Panc1 (cell line): ENCODE measurements at regions of chr2 and their contacts with region 1.

Region 1: GRCh38 chr2:96747136-96747535 is 7.3 kb upstream of the LMAN2L start:
- DNase-seq: no peak
- ATAC-seq: no peak
- H3K4me3 ChIP-seq: no peak overlapping the region
- H3K27ac ChIP-seq: no peak overlapping the region
- H3K4me1 ChIP-seq: no peaks in the 10 kb centered on the region
- H3K27me3 ChIP-seq: no peaks in the 10 kb centered on the region
- CTCF ChIP-seq: no peak

Region 2: DNA sequence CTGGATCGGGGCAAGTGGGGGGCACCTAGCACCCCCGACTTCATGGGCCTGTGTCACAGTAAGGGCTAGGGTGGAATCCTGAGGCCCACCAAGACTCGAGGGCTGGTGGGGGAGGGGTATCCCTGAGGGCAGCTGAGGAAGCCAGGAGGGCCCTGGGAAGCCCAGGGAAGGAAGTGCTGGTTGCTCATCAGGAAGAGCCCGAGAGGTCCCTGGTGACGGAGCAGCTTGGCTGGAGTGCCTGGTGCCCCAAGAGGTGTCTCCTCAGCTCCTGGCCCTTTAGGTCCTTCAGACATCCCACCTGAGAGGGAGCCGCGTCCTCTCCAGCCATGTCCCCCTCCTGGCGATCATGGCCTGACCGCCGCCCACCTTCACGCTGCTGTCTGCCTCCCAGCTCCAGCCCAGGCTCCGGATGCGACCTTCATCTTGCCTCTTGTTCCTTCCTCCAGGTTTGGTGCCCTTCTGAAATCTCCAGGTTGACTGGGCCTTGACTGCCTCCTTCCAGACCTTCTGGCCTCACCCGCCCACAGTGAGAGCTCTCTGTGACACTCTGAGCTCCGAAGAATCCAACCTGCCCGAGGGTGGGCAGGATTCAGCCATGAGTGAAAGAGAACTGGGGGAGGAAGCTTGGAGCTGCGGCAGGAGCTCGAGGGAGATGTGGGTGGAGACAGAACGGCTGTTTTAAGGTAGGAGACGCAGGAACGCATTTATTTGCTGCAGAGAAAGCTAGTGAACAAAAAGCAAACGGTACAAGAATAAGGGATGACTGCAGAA is 165.4 kb after region 1 on chr2:
- CTCF ChIA-PET with region 1: no interaction called
- POLR2A ChIA-PET with region 1: interaction called, 16 read pairs
- in situ Hi-C with region 1: no loop called
- intact Hi-C with region 1: no loop called
- DNase-seq: no peak
- ATAC-seq: no peak
- H3K4me3 ChIP-seq: no peak overlapping the region
- H3K27ac ChIP-seq: no peak overlapping the region
- H3K4me1 ChIP-seq: no peaks in the 10 kb centered on the region
- H3K27me3 ChIP-seq: no peaks in the 10 kb centered on the region
- CTCF ChIP-seq: no peak